ENCODE measurements at regions of chr4 and their contacts with region 1.

Region 1: DNA sequence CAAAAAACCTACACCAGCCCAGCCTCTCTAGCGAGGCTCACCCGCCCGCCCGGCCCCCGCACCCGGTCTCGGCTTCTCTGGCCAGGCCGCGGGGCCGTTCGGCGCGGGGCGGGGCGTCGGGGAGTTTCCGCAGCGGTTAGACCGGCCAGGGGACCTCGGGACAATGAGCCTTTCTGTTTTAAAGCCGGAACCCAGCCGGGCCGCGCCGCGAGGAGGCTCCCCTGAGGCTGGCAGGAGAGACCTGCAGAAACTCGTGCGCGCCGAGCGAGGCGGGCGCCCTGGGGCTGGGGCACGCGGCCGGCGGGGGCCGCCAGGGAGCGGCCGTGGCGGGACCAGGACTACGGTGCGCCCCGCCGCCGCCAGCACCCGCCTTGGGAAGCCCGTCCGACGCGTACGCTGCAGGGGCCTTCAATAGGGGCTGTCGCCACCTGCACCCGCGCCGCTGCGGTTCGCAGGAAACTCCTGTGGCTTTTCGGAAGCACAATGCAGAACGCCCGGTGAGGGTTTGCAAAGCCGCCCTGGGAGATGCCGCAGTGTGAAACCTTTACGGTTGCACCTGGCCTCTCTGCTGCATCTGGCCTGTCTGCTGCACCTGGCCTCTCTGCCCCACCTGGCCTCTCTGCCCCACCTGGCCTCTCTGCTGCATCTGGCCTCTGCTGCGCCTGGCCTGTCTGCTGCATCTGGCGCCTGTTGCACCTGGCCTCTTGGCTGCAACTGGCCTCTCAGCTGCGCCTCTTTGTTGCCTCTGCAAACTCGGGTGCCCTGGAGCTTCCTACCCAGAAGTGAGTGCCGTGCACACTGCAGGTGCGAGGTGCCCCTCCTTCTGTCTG is 63.9 kb downstream of the TRAPPC11 start:
- DNase-seq: peak; percentile 72
- ATAC-seq: peak; percentile 58 to 80

Region 2: DNA sequence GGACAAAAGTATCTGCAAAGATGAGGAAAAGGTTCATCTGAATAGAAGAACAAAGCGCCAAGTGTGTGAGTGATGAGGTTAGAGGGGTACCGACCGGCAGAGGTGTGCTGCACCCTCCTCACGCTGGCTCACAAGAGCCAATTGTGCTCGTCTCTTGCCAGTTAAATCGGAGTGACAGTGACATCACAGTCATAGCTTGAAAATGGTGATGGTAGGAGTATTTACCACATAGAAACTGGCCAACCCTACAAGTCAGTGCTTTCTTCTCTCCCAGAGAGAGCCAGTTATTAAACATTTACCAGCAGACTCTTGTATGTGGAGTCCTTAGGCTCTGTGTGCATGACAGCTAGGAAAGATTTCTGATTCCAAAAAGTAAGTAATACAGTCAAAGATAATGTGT is 435.3 kb before region 1 on chr4:
- intact Hi-C with region 1: no loop called
- DNase-seq: no peak
- ATAC-seq: no peak

Region 3: DNA sequence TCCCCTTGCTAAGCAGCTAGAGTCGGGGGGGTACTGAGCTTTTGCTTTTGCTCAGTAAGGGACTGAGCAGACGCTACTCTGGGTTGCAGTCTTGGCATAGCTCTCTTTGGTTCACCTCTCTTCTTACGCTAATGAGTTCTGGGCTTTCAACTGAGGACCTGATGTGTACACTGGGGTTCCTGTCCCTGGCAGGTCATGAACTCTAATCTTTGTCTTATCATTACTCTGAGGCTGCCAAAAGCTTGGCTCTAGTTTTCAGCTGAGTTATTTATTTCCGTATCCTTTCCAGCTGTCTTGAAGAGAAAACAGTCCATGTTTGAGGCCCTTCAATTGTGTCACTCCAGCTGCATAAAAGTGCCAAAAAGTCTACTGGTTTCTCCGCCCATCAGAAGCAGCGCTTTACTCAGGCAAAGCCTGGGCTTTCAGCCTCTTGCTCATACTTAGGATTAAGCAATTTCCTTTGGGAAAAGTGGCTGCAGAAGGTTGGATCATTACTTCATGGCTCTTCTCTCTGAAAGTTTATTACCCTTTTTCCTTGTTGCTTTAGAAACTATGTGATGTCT is 61.1 kb after region 1 on chr4:
- intact Hi-C with region 1: loop called in 1 of 2 experiments (anchors 10 kb)
- DNase-seq: peak; percentile 58
- ATAC-seq: peak; percentile 89 to 93

Region 4: DNA sequence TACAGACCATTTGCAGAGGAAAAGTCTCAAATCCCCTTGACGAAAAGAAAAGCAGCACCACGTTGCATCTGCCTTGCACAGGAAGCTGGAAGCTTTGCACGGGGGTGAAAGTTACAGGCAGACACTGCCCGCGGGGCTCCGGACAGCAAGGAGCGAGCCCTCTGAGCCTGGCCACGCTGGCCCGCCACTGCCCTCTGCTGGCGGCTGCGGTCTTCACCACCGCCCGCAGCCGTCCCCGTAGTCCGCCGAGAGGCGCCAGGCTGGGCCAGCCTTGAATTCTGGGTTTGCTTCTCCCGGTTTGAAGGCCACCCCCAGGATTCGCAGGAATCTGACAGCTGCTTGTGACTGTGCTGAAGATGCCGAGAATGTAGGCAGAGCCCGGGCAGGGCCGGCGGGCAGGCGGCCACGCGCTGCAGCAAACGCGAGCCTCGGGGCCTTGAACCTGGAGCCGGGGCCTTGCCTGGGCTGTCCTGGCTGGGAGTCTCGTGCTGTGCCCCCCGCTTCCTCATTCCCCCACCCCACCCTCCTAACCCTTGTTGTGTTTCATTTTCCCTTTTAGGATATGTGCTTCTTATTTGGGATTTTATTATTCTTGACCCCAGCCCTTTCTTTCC is 445.6 kb after region 1 on chr4:
- intact Hi-C with region 1: loop called in 1 of 2 experiments (anchors 10 kb)
- DNase-seq: peak; percentile 77
- ATAC-seq: peak; percentile 97 to 98

Measured in left cardiac atrium (tissue), 4 donors.